PC-9 (cell line): ENCODE measurements at regions of chr1 and their contacts with region 1.

Region 1: GRCh38 chr1:116951200-116951935 is 41.7 kb downstream of the PTGFRN start:
- DNase-seq: no peak
- H3K4me3 ChIP-seq: no peak overlapping the region
- H3K27ac ChIP-seq: no peak overlapping the region
- H3K4me1 ChIP-seq: no peaks in the 10 kb centered on the region
- H3K27me3 ChIP-seq: no peaks in the 10 kb centered on the region
- CTCF ChIP-seq: no peak

Region 2: GRCh38 chr1:116909510-116910378 is 41.6 kb before region 1 on chr1 and contains the start of gene PTGFRN:
- CTCF ChIA-PET with region 1: no interaction called
- POLR2A ChIA-PET with region 1: no interaction called
- intact Hi-C with region 1: no loop called
- DNase-seq: peak; percentile 53 to 68
- H3K4me3 ChIP-seq: peak within 1 kb of the TSS; percentile 77
- H3K27ac ChIP-seq: peak within 1 kb of the TSS; percentile 21
- H3K4me1 ChIP-seq: peaks cover 56% of the 10 kb centered on the region
- H3K27me3 ChIP-seq: no peaks in the 10 kb centered on the region
- CTCF ChIP-seq: no peak
- total RNA-seq, gene PTGFRN: 83.7 and 87.3 TPM in 2 replicates

Region 3: GRCh38 chr1:116934586-116935207 is 16.7 kb before region 1 on chr1:
- CTCF ChIA-PET with region 1: no interaction called
- POLR2A ChIA-PET with region 1: interaction called, 11 read pairs
- intact Hi-C with region 1: no loop called
- DNase-seq: no peak
- H3K4me3 ChIP-seq: no peak overlapping the region
- H3K27ac ChIP-seq: no peak overlapping the region
- H3K4me1 ChIP-seq: peaks cover 8% of the 10 kb centered on the region
- H3K27me3 ChIP-seq: no peaks in the 10 kb centered on the region
- CTCF ChIP-seq: peak; percentile 54; the same call in 1 of the 2 replicates